ENCODE measurements at regions of chr21 and their contacts with region 1.

Region 1: DNA sequence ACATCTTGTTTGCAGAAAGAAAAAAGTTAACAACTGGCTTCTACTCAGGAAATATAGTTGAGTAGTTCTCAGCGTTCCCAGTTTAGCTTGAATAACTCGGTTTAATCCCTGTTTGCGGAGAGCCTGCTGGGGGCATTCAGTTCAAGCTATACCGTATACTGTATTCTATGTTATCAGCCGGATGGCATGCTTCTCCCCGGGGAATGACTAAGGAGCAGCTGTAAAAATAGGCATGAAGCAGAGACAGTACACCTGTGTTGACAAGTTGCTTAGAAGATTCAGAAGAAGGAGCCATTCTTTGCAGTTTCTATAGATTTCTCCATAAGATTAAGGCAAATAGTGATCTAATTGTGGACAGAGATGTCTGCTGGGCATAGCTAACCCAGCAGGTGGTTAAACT is 267.8 kb upstream of the NCAM2 start:
- DNase-seq: no peak
- ATAC-seq: no peak
- H3K4me3 ChIP-seq: no peak overlapping the region
- H3K27ac ChIP-seq: no peak overlapping the region
- H3K4me1 ChIP-seq: no peaks in the 10 kb centered on the region
- H3K27me3 ChIP-seq: no peaks in the 10 kb centered on the region
- CTCF ChIP-seq: no peak

Region 2: GRCh38 chr21:20783611-20784010 is 53.2 kb after region 1 on chr21:
- intact Hi-C with region 1: loop called in 1 of 2 experiments (anchors 5 kb)
- DNase-seq: no peak
- ATAC-seq: no peak
- H3K4me3 ChIP-seq: no peak overlapping the region
- H3K27ac ChIP-seq: no peak overlapping the region
- H3K4me1 ChIP-seq: no peaks in the 10 kb centered on the region
- H3K27me3 ChIP-seq: no peaks in the 10 kb centered on the region
- CTCF ChIP-seq: no peak